Activated T-helper 2 cell treated with anti-CD3 and anti-CD28 coated beads, Interferon-gamma antibody, Interleukin-2, Interleukin-4, amounts not matched to agents 10 μg/mL and 5 μg/mL and 100 μg/mL, durations not matched to agents 14 hours and 24 hours and 36 hours (primary cell): ENCODE measurements at regions of chr1 and their contacts with region 1.

Region 1: DNA sequence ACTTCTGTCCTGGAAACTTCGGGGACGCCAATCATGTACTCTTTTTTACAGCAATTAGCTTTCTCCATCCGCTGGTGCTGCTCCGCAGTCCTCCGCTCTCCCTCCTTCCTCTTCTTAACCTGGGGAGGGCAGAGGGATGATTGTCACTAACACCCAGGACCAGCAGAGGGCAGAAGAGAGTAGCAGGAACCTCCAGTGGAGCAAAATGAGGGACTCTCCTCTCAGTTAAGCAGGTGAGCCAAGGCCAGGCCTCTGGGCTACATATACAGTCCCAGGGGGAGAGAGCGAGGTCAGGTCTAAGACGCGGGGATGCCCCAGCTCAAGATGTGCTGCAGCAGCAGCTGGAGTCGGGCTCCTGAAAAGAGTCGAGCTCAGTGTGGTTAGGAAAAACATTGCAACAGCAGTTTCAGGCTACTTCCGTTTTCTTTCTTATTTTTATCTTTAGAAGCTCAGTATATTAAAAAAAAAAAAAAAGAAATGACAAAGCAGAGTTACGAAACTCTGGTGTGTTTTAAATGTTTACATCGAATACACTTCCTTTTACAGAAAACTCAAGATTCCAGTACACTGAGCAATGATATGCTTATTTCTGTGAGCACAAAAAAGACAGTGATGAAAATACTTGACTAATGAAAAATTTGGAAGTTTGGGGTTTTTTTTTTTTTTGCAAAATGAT is 25.7 kb upstream of the NLRP3 start:
- DNase-seq: peak; percentile 77
- H3K4me3 Mint-ChIP-seq: peak overlapping the region; percentile 62
- H3K27ac Mint-ChIP-seq: peak overlapping the region; percentile 33
- H3K4me1 Mint-ChIP-seq: peaks cover 17% of the 10 kb centered on the region
- H3K27me3 Mint-ChIP-seq: peaks cover 30% of the 10 kb centered on the region

Region 2: GRCh38 chr1:246931549-246932365 is 458.5 kb before region 1 on chr1 and contains the start of gene AHCTF1:
- intact Hi-C with region 1: no loop called
- DNase-seq: peak; percentile 94
- H3K4me3 Mint-ChIP-seq: peak within 1 kb of the TSS; percentile 92
- H3K27ac Mint-ChIP-seq: peak within 1 kb of the TSS; percentile 92
- H3K4me1 Mint-ChIP-seq: peaks cover 19% of the 10 kb centered on the region
- H3K27me3 Mint-ChIP-seq: no peaks in the 10 kb centered on the region
- total RNA-seq, gene AHCTF1: 47.2 and 47.7 TPM in 2 replicates

Region 3: DNA sequence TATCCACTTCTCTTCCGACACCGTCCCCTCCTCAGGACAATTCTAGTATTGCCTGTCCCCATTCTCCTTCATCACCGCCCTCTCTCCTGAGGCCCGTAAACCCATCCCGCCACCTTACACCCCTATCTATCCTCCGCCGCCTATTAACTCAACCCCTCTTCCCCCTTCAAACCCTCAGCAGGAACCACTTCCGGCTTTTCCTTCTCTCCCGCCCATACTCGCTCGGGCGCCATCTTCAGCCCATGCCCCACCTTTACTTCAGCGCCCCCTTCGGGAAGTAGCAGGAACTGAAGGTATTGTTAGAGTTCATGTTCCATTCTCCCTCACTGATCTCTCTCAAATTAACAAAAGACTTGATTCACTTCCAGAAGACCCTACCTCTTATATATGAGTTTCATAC is 102.8 kb before region 1 on chr1:
- intact Hi-C with region 1: no loop called
- DNase-seq: no peak
- H3K4me3 Mint-ChIP-seq: no peak overlapping the region
- H3K27ac Mint-ChIP-seq: no peak overlapping the region
- H3K4me1 Mint-ChIP-seq: no peaks in the 10 kb centered on the region
- H3K27me3 Mint-ChIP-seq: no peaks in the 10 kb centered on the region

Region 4: GRCh38 chr1:247373721-247374141 is 16.5 kb before region 1 on chr1:
- intact Hi-C with region 1: no loop called
- DNase-seq: peak; percentile 44
- H3K4me3 Mint-ChIP-seq: no peak overlapping the region
- H3K27ac Mint-ChIP-seq: no peak overlapping the region
- H3K4me1 Mint-ChIP-seq: no peaks in the 10 kb centered on the region
- H3K27me3 Mint-ChIP-seq: peaks cover 14% of the 10 kb centered on the region

Region 5: DNA sequence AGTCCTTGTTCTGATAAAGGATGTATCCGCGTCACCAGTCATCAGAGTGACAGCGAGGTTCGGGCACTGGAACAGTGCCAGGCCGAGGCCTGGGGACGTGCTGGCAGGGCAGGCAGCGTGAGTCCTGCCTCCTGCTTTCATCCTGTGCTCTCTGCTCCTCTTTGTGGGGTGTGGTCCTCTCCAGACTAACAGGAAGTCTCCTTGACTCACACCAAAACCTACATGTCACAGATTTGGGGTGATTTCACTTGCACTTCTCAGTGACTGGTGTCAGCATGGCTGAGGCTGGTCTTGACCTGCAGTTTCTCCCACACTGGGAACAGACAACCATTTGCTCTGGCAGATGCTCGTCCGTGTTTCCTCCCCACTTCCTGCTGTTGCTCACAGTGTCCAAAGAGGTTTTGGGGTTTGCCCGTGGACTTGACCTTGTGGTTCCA is 16.9 kb after region 1 on chr1:
- intact Hi-C with region 1: loop called (anchors 1 kb)
- DNase-seq: peak; percentile 53
- H3K4me3 Mint-ChIP-seq: peak overlapping the region; percentile 28
- H3K27ac Mint-ChIP-seq: peak overlapping the region; percentile 16
- H3K4me1 Mint-ChIP-seq: peaks cover 36% of the 10 kb centered on the region
- H3K27me3 Mint-ChIP-seq: peaks cover 35% of the 10 kb centered on the region

Region 6: DNA sequence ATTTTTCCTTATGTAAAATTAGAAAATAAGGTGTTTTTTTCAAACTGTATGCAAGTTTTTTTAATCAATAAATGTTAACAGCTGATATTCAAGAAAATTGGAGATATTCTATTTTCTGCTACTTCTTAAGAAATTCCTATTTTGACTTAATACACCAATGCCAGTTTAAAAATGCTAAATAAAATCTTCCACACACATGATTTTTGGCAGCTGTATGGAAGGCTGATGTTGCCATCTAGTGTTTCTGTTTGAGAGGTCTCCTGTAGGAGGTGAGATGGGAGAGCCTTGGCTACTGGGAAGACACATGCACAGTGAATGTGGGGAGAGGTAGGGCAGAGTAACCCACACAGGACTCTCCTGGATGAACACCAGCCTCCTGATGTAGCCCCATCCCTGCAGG is 96.8 kb after region 1 on chr1:
- intact Hi-C with region 1: loop called (anchors 1 kb)
- DNase-seq: no peak
- H3K4me3 Mint-ChIP-seq: no peak overlapping the region
- H3K27ac Mint-ChIP-seq: no peak overlapping the region
- H3K4me1 Mint-ChIP-seq: no peaks in the 10 kb centered on the region
- H3K27me3 Mint-ChIP-seq: peaks cover 6% of the 10 kb centered on the region

Region 7: GRCh38 chr1:247576495-247576894 is 186.2 kb after region 1 on chr1:
- intact Hi-C with region 1: loop called (anchors 1 kb)
- DNase-seq: no peak
- H3K4me3 Mint-ChIP-seq: no peak overlapping the region
- H3K27ac Mint-ChIP-seq: no peak overlapping the region
- H3K4me1 Mint-ChIP-seq: no peaks in the 10 kb centered on the region
- H3K27me3 Mint-ChIP-seq: no peaks in the 10 kb centered on the region